Caco-2 (cell line): ENCODE measurements at regions of chr1 and their contacts with region 1.

Region 1: GRCh38 chr1:117067533-117068370 is 7.6 kb downstream of the TTF2 start:
- DNase-seq: peak; percentile 38 to 49
- H3K4me3 ChIP-seq: no peak overlapping the region
- H3K4me3 Mint-ChIP-seq: no peak overlapping the region
- H3K27ac Mint-ChIP-seq: no peak overlapping the region
- H3K4me1 ChIP-seq: no peaks in the 10 kb centered on the region
- H3K4me1 Mint-ChIP-seq: no peaks in the 10 kb centered on the region
- H3K27me3 ChIP-seq: no peaks in the 10 kb centered on the region
- H3K27me3 Mint-ChIP-seq: no peaks in the 10 kb centered on the region
- CTCF ChIP-seq: peak; percentile 41 to 58

Region 2: DNA sequence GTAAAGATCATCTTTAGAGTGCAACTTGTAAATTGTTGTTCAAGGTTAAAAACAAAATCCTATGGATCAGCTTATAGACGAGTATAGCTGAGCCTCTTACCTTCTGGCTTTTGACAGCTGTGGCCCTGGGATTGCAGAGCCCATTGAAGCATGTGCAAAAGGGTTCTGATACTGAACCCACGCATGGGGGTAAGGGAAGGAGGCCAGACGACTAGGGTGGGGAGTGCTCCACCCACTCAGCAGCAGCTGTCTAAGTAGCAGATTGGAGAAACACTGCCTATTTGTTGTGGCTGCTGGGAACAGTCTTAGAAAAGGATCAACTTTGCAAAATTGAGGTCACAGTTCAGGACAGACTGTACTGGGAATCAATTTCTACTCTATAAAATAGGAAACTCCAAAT is 50.1 kb before region 1 on chr1:
- CTCF ChIA-PET with region 1: no interaction called
- POLR2A ChIA-PET with region 1: no interaction called
- intact Hi-C with region 1: no loop called
- DNase-seq: no peak
- H3K4me3 ChIP-seq: no peak overlapping the region
- H3K4me3 Mint-ChIP-seq: no peak overlapping the region
- H3K27ac Mint-ChIP-seq: no peak overlapping the region
- H3K4me1 ChIP-seq: 0 out of 2 replicates have a peak, but pooled peaks cover 7% of the 10 kb centered on the region
- H3K4me1 Mint-ChIP-seq: peaks cover 5% of the 10 kb centered on the region
- H3K27me3 ChIP-seq: no peaks in the 10 kb centered on the region
- H3K27me3 Mint-ChIP-seq: no peaks in the 10 kb centered on the region
- CTCF ChIP-seq: no peak

Region 3: GRCh38 chr1:117128323-117129079 is 60.7 kb after region 1 on chr1:
- CTCF ChIA-PET with region 1: interaction called, 10 read pairs
- POLR2A ChIA-PET with region 1: no interaction called
- intact Hi-C with region 1: loop called (anchors 1 kb)
- DNase-seq: no peak
- H3K4me3 ChIP-seq: no peak overlapping the region
- H3K4me3 Mint-ChIP-seq: no peak overlapping the region
- H3K27ac Mint-ChIP-seq: no peak overlapping the region
- H3K4me1 ChIP-seq: no peaks in the 10 kb centered on the region
- H3K4me1 Mint-ChIP-seq: peaks cover 12% of the 10 kb centered on the region
- H3K27me3 ChIP-seq: no peaks in the 10 kb centered on the region
- H3K27me3 Mint-ChIP-seq: no peaks in the 10 kb centered on the region
- CTCF ChIP-seq: no peak